ENCODE measurements at regions of chr1 and their contacts with region 1.

Region 1: DNA sequence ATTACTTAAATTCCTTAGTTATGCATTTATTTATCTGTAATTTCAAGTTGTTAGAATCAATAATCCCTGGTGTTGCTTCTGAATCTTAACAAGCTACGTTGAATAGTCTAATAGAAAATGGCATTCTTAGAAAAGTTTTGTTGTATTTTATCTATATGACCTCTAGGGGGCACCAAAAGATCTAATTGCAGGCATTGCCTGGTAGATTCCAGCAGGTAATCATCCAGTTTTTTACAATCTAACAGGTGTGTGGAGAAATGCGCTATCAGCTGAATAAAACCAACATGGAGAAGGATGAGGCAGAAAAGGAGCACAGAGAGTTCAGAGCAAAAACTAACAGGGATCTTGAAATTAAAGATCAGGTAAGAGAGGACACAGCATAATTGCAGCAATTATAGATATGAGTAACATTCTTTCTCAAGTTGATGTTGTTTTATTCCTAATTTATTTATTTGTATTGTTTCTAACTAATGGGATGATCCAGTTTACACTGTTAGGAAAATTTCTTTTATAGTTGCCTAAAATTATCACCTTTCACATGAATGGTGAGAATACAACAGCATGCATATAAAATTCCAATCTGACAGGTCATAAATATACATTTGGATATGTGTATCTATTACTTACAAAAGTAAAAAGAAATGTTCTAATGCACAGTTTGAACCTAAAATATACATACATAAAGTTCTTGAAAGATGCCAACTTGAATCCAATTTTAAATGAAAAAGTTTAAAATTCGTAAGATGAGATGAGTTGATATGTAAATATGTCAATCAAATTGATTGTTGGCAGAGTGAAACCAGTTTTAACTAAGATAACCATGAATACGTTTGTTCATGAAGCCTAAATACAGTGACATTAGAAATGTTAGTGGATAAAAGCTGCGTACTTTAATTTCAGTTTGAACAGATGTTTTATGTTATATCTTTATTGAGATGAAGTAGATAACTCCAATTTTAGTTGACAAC is 88.4 kb downstream of the SDCCAG8 start:
- DNase-seq: no peak
- ATAC-seq: no peak
- H3K4me3 Mint-ChIP-seq: no peak overlapping the region
- H3K27ac Mint-ChIP-seq: no peak overlapping the region
- H3K4me1 Mint-ChIP-seq: no peaks in the 10 kb centered on the region
- H3K27me3 Mint-ChIP-seq: no peaks in the 10 kb centered on the region
- CTCF ChIP-seq: peak; percentile 88

Region 2: DNA sequence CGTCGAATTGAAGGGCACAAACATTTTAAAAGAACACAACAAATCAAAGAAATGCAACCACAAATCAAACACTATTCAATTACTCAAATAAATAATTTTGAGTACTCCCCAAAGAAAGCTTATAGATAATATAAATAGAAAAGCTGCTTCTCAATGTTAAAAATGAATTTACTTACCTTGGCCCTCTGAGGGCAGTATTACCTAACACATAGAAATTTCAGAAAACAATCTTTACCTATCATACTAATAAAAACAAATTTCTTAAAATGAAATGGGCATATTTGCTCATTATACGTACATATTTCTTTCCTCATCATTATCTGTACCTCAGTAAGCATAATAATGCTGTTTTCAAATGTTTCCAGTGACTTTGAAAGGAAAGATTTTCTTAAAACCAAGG is 364.0 kb after region 1 on chr1:
- CTCF ChIA-PET with region 1: interaction called, 5 read pairs
- POLR2A ChIA-PET with region 1: no interaction called
- intact Hi-C with region 1: loop called (anchors 5 kb)
- DNase-seq: no peak
- ATAC-seq: no peak
- H3K4me3 Mint-ChIP-seq: no peak overlapping the region
- H3K27ac Mint-ChIP-seq: no peak overlapping the region
- H3K4me1 Mint-ChIP-seq: peaks cover 8% of the 10 kb centered on the region
- H3K27me3 Mint-ChIP-seq: no peaks in the 10 kb centered on the region
- CTCF ChIP-seq: no peak

Region 3: DNA sequence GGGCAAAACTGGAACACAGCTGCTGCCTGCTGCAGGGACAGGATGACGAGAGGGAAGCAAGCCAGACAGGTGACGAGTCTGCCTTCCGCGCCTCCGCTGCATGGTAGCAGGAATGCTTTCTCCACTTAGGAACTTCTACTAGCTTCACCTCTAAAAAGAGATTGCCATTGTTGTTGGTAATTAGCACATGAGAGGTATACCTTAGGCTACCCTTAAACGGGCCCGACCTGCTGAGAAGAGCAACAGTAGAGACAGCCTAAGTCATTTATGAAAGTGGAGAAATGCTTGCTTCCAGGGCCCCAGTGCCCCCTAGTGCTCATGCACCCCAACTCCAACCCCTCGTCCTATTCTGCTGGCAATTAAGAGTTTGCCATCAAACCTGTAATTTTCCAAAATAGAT is 602.7 kb after region 1 on chr1:
- CTCF ChIA-PET with region 1: interaction called, 3 read pairs
- POLR2A ChIA-PET with region 1: no interaction called
- intact Hi-C with region 1: loop called (anchors 2 kb)
- DNase-seq: no peak
- ATAC-seq: no peak
- H3K4me3 Mint-ChIP-seq: no peak overlapping the region
- H3K27ac Mint-ChIP-seq: no peak overlapping the region
- H3K4me1 Mint-ChIP-seq: no peaks in the 10 kb centered on the region
- H3K27me3 Mint-ChIP-seq: peaks cover 7% of the 10 kb centered on the region
- CTCF ChIP-seq: no peak

Region 4: GRCh38 chr1:244272471-244273261 is 928.4 kb after region 1 on chr1:
- CTCF ChIA-PET with region 1: interaction called, 23 read pairs
- POLR2A ChIA-PET with region 1: no interaction called
- intact Hi-C with region 1: loop called (anchors 1 kb)
- DNase-seq: peak; percentile 50
- ATAC-seq: peak; percentile 96
- H3K4me3 Mint-ChIP-seq: no peak overlapping the region
- H3K27ac Mint-ChIP-seq: no peak overlapping the region
- H3K4me1 Mint-ChIP-seq: peaks cover 21% of the 10 kb centered on the region
- H3K27me3 Mint-ChIP-seq: no peaks in the 10 kb centered on the region
- CTCF ChIP-seq: peak; percentile 92

Region 5: DNA sequence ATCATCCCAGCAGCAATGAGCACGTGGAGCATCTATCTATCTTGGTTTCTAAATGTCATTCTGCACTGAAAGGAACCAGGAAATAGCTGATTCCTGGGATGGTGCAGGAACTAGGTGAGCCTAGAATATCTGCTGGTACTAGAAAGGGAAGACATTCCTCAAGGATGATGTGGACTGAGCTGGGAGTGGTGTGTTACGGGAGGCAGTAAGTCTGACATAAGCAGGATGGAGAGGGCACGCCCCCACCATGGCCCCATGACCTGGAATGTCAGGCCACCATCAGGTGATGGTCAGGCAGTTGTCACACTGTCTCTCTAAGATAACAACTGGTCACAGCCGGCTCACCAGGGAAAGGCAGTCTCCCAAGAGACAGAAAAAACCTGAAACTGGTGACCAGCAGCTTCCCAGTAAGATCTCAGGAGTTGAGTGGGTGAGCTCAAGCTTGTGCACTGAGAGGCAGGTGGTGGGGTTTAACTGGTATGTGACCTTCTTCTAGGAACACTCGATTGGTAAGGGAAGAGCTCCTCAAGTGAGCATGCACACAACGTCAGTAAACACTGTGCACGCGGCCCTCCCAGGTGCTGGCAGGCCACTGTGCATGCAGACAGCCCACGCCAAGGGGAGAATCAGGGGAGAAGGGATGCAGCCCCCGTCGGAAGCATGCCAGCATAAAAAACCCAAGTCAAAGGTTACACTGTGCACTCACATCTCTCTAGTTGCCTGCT is 958.8 kb after region 1 on chr1:
- CTCF ChIA-PET with region 1: interaction called, 9 read pairs
- POLR2A ChIA-PET with region 1: no interaction called
- intact Hi-C with region 1: loop called (anchors 1 kb)
- DNase-seq: no peak
- ATAC-seq: no peak
- H3K4me3 Mint-ChIP-seq: no peak overlapping the region
- H3K27ac Mint-ChIP-seq: no peak overlapping the region
- H3K4me1 Mint-ChIP-seq: peaks cover 19% of the 10 kb centered on the region
- H3K27me3 Mint-ChIP-seq: no peaks in the 10 kb centered on the region
- CTCF ChIP-seq: no peak